ENCODE measurements at regions of chr3 and their contacts with region 1.

Region 1: DNA sequence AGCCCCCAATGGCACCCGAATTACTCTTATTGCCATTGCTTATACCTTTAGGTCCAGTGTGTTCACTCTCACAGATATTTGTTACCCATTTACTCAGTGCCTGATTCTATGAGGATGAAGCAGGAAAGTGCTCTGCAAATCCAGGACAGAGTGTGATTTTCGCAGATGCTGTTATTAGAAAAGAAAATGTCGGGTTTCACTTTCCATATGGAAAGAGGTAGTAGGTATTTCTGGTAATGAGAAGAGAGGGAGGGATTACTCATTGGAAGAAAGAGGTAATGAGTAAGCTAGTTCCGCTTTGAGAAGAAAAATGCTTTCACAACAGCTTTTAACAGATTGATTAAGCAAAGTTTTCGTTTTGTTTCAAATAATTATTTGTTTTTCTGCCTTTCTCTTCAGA is 336.3 kb upstream of the CFAP20DC start:
- DNase-seq: peak; percentile 73 to 96 (median 89)
- H3K4me3 ChIP-seq: peak overlapping the region; percentile 12 to 66 (median 54)
- H3K4me3 Mint-ChIP-seq: peak overlapping the region; percentile 35 to 86
- H3K27ac ChIP-seq: peak overlapping the region in 1 of 2 donors; percentile 94
- H3K27ac Mint-ChIP-seq: peak overlapping the region; percentile 88 to 95 (median 93)
- H3K4me1 ChIP-seq: peaks cover 34 to 44% of the 10 kb centered on the region in 2 donors
- H3K4me1 Mint-ChIP-seq: peaks cover 46% of the 10 kb centered on the region
- H3K27me3 ChIP-seq: no peaks in the 10 kb centered on the region
- H3K27me3 Mint-ChIP-seq: peaks cover 0 to 2% (median 0%) of the 10 kb centered on the region in 3 donors
- CTCF ChIP-seq: no peak

Region 2: DNA sequence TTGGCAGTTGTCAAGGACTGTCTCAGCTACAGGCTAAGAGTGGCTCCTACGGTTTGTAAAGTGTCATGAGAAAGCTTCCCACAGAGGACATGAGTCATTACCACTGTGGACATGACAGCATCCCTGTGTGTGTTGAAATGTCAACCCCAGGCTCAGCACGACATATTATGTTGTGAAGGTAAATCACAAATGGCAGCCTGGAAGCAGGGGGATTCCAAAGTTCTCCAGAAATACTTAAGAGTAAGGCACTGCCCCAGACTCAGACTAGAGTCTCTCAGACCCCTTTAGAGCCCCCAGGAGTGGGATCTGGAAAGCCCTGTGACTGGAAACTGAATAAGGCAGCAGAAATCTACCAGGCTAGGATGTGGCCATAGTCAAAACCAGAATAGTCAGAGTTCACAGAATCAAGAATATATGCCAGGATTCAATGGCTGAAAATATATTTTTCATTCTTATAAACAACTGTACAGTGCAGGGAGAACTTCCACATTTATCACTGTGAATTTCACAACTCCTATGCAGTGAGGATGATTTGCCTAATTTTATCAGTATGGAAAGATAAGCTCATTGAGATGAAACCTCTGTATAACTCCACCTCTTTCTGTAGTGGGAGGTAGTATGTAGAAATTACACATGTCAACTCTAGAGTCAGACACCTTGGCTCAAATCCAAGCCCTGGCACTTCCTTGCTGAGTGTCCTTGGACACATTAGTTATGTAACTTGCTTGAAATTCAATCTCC is 99.2 kb before region 1 on chr3:
- intact Hi-C with region 1: loop called in 1 of 2 experiments (anchors 10 kb)
- DNase-seq: peak; percentile 91 to 99 (median 95)
- H3K4me3 ChIP-seq: peak overlapping the region in 1 of 3 experiments; percentile 16
- H3K4me3 Mint-ChIP-seq: peak overlapping the region; percentile 13 to 62
- H3K27ac ChIP-seq: peak overlapping the region; percentile 89 to 98
- H3K27ac Mint-ChIP-seq: peak overlapping the region; percentile 98 to 100 (median 99)
- H3K4me1 ChIP-seq: peaks cover 25 to 26% of the 10 kb centered on the region in 2 donors
- H3K4me1 Mint-ChIP-seq: peaks cover 34% of the 10 kb centered on the region
- H3K27me3 ChIP-seq: no peaks in the 10 kb centered on the region
- H3K27me3 Mint-ChIP-seq: peaks cover 0 to under 1% (median 0%) of the 10 kb centered on the region in 3 donors
- CTCF ChIP-seq: no peak

Region 3: GRCh38 chr3:59426821-59427565 is 40.8 kb after region 1 on chr3:
- intact Hi-C with region 1: loop called in 1 of 2 experiments (anchors 2 kb)
- DNase-seq: peak; percentile 65 to 81 (median 77)
- H3K4me3 ChIP-seq: peak overlapping the region in 2 of 3 experiments; percentile 12 to 43
- H3K4me3 Mint-ChIP-seq: peak overlapping the region; percentile 25 to 83
- H3K27ac ChIP-seq: peak overlapping the region in 1 of 2 donors; percentile 72
- H3K27ac Mint-ChIP-seq: peak overlapping the region; percentile 48 to 95 (median 90)
- H3K4me1 ChIP-seq: peaks cover 44 to 47% of the 10 kb centered on the region in 2 donors
- H3K4me1 Mint-ChIP-seq: peaks cover 49% of the 10 kb centered on the region
- H3K27me3 ChIP-seq: no peaks in the 10 kb centered on the region
- H3K27me3 Mint-ChIP-seq: peaks cover 0 to 11% (median 6%) of the 10 kb centered on the region in 3 donors
- CTCF ChIP-seq: no peak

Region 4: DNA sequence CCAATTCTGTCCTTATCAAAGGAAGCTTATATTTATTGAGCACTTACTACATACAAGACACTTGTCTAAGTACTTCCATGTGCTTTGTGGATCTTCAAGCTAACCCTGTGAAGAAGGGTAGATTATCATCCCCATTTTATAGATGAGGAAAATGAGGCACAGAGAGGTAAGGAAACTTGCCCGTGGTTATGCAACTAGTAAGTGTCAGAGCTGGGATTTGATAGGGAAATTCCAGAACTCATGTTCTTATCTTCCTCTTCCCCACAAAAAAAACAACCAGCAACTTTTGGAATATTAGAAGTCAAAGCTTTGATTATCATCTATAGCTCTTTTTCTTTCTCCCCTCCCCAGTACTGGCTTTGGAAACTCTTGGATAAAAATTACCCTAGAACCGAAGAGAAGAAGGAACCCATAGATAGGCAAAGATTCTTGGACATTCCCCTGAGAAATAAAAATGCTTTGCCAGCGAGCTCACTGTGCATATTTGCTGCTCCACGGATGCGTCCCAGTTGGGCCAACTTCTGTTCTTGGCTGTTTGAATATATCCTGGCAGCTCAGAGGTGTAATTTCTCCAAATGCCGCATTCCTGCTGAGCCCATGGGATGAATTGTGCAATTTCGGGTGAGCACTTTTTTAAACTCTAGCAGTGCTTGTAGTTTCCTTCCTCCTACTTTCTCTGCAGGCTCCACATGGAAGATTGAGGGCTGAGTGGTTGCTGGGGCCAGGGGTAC is 255.2 kb after region 1 on chr3:
- intact Hi-C with region 1: no loop called
- DNase-seq: no peak
- H3K4me3 ChIP-seq: no peak overlapping the region
- H3K4me3 Mint-ChIP-seq: no peak overlapping the region
- H3K27ac ChIP-seq: no peak overlapping the region
- H3K27ac Mint-ChIP-seq: no peak overlapping the region
- H3K4me1 ChIP-seq: no peaks in the 10 kb centered on the region
- H3K4me1 Mint-ChIP-seq: peaks cover 2% of the 10 kb centered on the region
- H3K27me3 ChIP-seq: peaks cover 5 to 6% of the 10 kb centered on the region in 2 donors
- H3K27me3 Mint-ChIP-seq: peaks cover 8 to 14% (median 8%) of the 10 kb centered on the region in 3 donors
- CTCF ChIP-seq: no peak

Measured in CD14-positive monocyte (primary cell).